T-cell (primary cell): ENCODE measurements at regions of chr15 and their contacts with region 1.

Region 1: DNA sequence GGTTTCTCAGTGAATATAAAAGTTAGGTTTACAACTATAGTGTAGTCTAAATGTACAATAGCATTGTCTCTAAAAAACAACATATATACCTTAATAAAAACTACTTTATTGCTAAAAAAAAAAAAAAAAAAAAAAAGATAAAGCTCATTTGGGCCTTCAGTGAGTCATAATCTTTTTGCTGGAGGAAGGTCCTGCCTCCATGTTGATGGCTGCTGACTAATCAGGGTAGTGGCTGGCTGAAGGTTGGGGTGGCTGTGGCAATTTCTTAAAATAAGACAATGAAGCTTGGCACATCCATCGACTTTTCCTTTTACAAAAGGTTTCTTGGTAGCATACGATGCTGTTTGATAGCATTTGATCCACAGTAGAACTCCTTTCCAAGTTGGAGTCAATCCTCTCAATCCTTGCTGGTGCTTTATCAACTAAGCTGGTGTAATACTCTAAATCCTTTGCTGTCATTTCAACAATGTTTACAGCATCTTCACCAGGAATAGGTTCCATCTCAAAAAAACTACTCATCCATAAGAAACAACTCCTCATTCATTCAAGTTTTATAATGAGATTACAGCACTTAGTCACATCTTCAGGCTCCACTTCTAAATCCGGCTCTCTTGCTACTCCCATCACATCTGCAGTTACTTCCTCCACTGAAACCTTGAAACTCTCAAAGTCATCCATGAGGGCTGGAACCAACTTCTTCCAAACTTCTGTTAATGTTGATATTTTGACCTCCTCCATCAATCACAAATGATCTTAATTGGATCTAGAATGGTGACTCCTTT is 13.3 kb downstream of the ZNF280D start:
- DNase-seq: no peak
- ATAC-seq: no peak
- H3K4me3 ChIP-seq: no peak overlapping the region
- H3K4me3 Mint-ChIP-seq: peak overlapping the region in 1 of 3 donors; percentile 19
- H3K27ac ChIP-seq: no peak overlapping the region
- H3K27ac Mint-ChIP-seq: no peak overlapping the region
- H3K4me1 ChIP-seq: peaks cover 0 to 22% of the 10 kb centered on the region in 2 experiments
- H3K4me1 Mint-ChIP-seq: peaks cover 66 to 68% (median 67%) of the 10 kb centered on the region in 3 donors
- H3K27me3 ChIP-seq: no peaks in the 10 kb centered on the region
- H3K27me3 Mint-ChIP-seq: no peaks in the 10 kb centered on the region

Region 2: DNA sequence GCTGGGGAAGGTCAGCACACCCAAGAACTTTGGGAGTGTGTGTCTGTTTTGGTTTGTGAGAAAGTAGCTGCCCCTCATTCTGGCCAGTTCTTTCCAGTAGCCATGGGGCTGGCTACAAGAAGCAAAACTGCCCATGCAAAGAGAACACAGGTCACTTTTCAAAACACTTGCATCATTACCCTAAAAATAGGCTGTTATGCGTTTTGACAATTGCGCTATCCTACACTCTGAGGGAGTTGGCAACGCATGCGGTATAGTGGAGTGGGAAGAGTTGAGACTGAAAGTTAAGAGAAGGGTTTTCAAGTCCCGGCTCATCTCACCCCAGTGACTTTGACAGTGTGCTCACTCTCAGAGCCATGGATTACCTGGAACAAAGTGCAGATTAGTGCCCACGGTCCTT is 830.0 kb after region 1 on chr15:
- CTCF ChIA-PET with region 1: no interaction called
- POLR2A ChIA-PET with region 1: interaction called in 1 of 2 experiments, 14 read pairs
- DNase-seq: no peak
- ATAC-seq: no peak
- H3K4me3 ChIP-seq: no peak overlapping the region
- H3K4me3 Mint-ChIP-seq: no peak overlapping the region
- H3K27ac ChIP-seq: no peak overlapping the region
- H3K27ac Mint-ChIP-seq: no peak overlapping the region
- H3K4me1 ChIP-seq: no peaks in the 10 kb centered on the region
- H3K4me1 Mint-ChIP-seq: no peaks in the 10 kb centered on the region
- H3K27me3 ChIP-seq: peaks cover 0 to 31% of the 10 kb centered on the region in 2 experiments
- H3K27me3 Mint-ChIP-seq: peaks cover 3 to 5% of the 10 kb centered on the region in 2 donors